Naive thymus-derived CD4-positive, alpha-beta T cell (primary cell): ENCODE measurements at regions of chr3 and their contacts with region 1.

Region 1: GRCh38 chr3:123201566-123202427 is at the start of gene SEC22A:
- DNase-seq: peak; percentile 89 to 99 (median 97)
- ATAC-seq: peak; percentile 97
- H3K4me3 ChIP-seq: peak within 1 kb of the TSS; percentile 90
- H3K4me3 Mint-ChIP-seq: peak within 1 kb of the TSS; percentile 82 to 98 (median 92)
- H3K27ac ChIP-seq: peak within 1 kb of the TSS; percentile 99
- H3K27ac Mint-ChIP-seq: peak within 1 kb of the TSS; percentile 97 to 100 (median 99)
- H3K4me1 ChIP-seq: peaks cover 12% of the 10 kb centered on the region in 2 donors
- H3K4me1 Mint-ChIP-seq: peaks cover 13 to 41% (median 31%) of the 10 kb centered on the region in 7 donors
- H3K27me3 ChIP-seq: no peaks in the 10 kb centered on the region
- H3K27me3 Mint-ChIP-seq: peaks cover 0 to 9% (median 2%) of the 10 kb centered on the region in 5 donors
- total RNA-seq, gene SEC22A: 15.0 to 20.1 (median 17.1) TPM

Region 2: GRCh38 chr3:122793568-122794416 is 408.0 kb before region 1 on chr3 and contains the start of gene HSPBAP1:
- CTCF ChIA-PET with region 1: no interaction called
- POLR2A ChIA-PET with region 1: interaction called, 5 read pairs
- intact Hi-C with region 1: loop called (anchors 1 to 2 kb)
- DNase-seq: peak; percentile 71 to 90 (median 86)
- ATAC-seq: peak; percentile 77
- H3K4me3 ChIP-seq: peak within 1 kb of the TSS; percentile 83
- H3K4me3 Mint-ChIP-seq: peak within 1 kb of the TSS in 5 of 10 donors; percentile 91 to 97 (median 95)
- H3K27ac ChIP-seq: peak within 1 kb of the TSS; percentile 82
- H3K27ac Mint-ChIP-seq: peak within 1 kb of the TSS in 6 of 9 donors; percentile 79 to 99 (median 96)
- H3K4me1 ChIP-seq: peaks cover 22 to 34% of the 10 kb centered on the region in 2 donors
- H3K4me1 Mint-ChIP-seq: peaks cover 20 to 29% (median 27%) of the 10 kb centered on the region in 7 donors
- H3K27me3 ChIP-seq: no peaks in the 10 kb centered on the region
- H3K27me3 Mint-ChIP-seq: no peaks in the 10 kb centered on the region
- total RNA-seq, gene HSPBAP1: 9.0 to 31.5 (median 23.3) TPM

Region 3: DNA sequence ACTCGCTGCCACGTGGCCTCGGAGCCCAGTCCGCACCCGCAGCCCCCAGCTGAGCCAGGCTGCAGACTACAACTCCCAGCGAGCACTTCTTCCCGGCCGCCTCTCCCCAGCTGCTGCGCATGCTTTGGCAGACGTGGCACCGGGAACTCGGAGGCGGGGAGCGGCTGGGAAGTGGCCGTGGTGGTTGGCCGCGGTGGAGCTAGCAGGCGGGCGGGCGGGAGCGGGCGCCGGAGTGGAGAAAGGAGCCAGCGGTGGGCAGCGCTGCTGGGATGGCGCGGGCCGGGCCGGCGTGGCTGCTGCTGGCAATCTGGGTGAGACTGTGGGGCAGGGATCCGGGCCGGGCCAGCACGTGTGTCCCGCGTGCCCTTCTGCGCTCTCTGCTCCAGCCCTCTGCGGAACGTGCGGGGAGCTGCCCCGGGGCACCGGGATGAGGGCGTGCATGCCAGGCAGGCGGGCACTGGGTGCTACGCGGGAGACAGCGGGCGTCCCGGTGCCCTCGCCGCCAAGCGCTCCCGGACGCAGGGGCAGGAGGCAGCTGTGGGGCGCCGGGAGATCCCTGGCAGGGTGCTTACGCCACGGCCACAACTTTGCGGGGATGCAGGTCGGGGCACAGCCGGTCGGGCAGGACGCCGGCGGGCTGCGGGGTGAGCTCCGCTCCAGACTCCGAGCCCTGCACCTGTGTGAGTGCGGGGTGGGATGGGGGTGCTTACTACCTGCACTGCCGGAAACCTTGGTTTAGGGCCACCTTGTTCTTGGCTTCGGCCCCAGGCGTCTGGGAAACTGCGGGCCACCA is 134.7 kb before region 1 on chr3 and contains the start of gene PDIA5:
- CTCF ChIA-PET with region 1: no interaction called
- POLR2A ChIA-PET with region 1: interaction called, 4 read pairs
- intact Hi-C with region 1: loop called (anchors 1 to 5 kb)
- DNase-seq: peak in 8 of 9 donors; percentile 13 to 81 (median 28)
- ATAC-seq: peak; percentile 76
- H3K4me3 ChIP-seq: peak within 1 kb of the TSS; percentile 60
- H3K4me3 Mint-ChIP-seq: peak within 1 kb of the TSS; percentile 79 to 90 (median 84)
- H3K27ac ChIP-seq: peak within 1 kb of the TSS; percentile 45
- H3K27ac Mint-ChIP-seq: peak within 1 kb of the TSS in 7 of 9 donors; percentile 8 to 81 (median 53)
- H3K4me1 ChIP-seq: peaks cover 7 to 8% of the 10 kb centered on the region in 2 donors
- H3K4me1 Mint-ChIP-seq: peaks cover 6 to 41% (median 28%) of the 10 kb centered on the region in 7 donors
- H3K27me3 ChIP-seq: no peaks in the 10 kb centered on the region
- H3K27me3 Mint-ChIP-seq: peaks cover 0 to 8% (median 0%) of the 10 kb centered on the region in 5 donors
- total RNA-seq, gene PDIA5: 4.0 to 21.7 (median 6.3) TPM

Region 4: DNA sequence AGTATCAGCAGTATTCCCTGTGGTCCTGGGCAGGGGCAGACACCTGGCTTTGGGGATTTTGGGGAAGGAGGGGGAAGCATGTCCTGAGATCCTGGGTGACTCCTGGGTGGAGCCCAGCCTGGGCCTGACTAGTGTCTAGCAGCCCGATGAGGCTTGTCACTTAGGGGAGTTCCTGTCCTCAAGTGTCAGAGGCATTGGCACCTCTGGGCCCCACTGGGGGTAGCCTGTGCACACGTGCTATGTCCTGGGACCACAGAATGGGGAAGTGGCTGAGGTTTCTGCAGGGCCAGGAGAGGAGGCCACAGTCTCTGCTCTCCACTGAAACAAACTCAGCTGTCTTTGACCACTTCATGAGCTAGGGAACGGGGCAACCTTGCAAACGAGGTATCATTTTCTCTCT is 278.6 kb after region 1 on chr3:
- CTCF ChIA-PET with region 1: no interaction called
- POLR2A ChIA-PET with region 1: no interaction called
- intact Hi-C with region 1: no loop called
- DNase-seq: no peak
- ATAC-seq: no peak
- H3K4me3 ChIP-seq: no peak overlapping the region
- H3K4me3 Mint-ChIP-seq: no peak overlapping the region
- H3K27ac ChIP-seq: no peak overlapping the region
- H3K27ac Mint-ChIP-seq: no peak overlapping the region
- H3K4me1 ChIP-seq: no peaks in the 10 kb centered on the region
- H3K4me1 Mint-ChIP-seq: peaks cover 0 to 2% (median 0%) of the 10 kb centered on the region in 7 donors
- H3K27me3 ChIP-seq: no peaks in the 10 kb centered on the region
- H3K27me3 Mint-ChIP-seq: peaks cover 6 to 39% (median 18%) of the 10 kb centered on the region in 5 donors